Activated CD4-positive, alpha-beta T cell treated with anti-CD3 and anti-CD28 coated beads, Interleukin-2, amount 10 ng/mL, durations not matched to agents 24 days and 14 days (primary cell): ENCODE measurements at regions of chr19 and their contacts with region 1.

Region 1: GRCh38 chr19:925526-926322 is at the start of gene ARID3A:
- DNase-seq: peak; percentile 94
- H3K4me3 Mint-ChIP-seq: peak within 1 kb of the TSS; percentile 86
- H3K27ac Mint-ChIP-seq: peak within 1 kb of the TSS; percentile 83
- H3K4me1 Mint-ChIP-seq: peaks cover 11% of the 10 kb centered on the region
- H3K27me3 Mint-ChIP-seq: no peaks in the 10 kb centered on the region
- total RNA-seq, gene ARID3A: 35.6 and 36.6 TPM in 2 replicates

Region 2: DNA sequence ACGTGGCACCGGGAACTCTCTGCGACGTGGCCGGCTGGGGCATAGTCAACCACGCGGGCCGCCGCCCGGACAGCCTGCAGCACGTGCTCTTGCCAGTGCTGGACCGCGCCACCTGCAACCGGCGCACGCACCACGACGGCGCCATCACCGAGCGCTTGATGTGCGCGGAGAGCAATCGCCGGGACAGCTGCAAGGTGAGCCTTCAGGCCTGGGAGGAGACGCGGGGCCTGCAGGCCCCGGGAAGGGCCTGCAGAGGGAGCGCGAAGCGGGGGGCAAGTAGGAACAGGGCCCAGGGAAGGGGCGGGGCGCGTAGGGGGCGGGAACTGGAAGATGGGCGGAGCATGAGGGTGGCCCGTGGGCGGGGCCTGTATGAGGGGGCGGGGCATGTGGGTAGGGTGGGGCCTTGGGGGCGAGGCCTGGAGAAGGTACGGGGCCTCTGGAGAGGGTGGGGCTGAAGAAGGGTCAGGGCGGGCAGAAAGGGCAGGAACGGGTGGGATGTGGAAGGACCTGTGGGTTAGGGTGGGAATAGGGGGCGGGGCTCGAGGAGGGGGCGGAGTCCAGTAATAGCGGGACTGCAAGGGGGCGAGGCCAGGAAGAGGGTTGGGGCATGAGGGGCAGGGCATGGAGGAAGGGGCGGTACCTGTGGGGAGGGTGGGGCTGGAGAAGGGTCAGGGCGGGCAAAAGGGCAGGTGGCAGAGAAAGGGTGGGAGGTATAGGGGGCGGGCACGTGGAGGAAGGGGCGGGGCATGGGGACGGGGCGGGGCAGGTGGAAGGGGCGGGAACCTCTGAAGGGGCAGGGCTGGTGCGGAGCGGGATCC is 63.8 kb before region 1 on chr19:
- intact Hi-C with region 1: loop called (anchors 1 kb)
- DNase-seq: peak; percentile 86
- H3K4me3 Mint-ChIP-seq: peak overlapping the region; percentile 79
- H3K27ac Mint-ChIP-seq: peak overlapping the region; percentile 72
- H3K4me1 Mint-ChIP-seq: peaks cover 5% of the 10 kb centered on the region
- H3K27me3 Mint-ChIP-seq: peaks cover 12% of the 10 kb centered on the region

Region 3: DNA sequence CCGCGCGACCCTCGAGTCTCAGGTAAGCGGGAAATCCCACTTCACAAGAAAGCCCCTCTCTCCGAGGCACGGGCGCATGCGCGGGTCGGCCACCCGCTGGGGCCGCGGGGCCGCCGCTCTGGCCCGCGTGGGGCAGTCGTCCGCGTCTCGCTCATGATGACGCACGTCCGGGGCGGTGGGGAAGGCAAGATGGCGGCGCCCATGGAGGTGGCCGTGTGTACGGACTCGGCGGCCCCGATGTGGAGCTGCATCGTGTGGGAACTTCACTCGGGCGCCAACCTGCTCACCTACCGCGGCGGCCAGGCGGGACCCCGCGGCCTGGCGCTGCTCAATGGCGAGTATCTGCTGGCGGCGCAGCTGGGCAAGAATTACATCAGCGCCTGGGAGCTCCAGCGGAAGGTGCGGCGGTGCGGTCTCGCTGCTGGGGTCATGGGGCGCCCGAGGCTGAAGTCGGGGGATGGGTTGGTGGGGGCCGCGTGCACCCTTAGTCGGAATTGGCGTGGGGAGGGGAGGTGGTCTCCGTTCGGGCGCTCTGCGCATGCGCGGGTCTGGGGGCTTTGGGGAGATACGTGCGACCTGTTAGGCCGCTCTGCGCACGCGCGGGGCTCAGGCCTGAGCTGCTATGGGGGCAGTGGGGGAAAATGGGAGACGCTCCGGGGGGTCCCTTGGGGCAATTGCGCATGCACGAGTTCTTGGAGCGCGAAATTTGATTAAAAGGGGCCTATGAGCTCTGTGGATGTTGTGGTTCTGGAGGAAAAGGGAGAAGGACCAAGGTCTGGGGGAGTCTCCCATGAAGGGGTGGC is 58.6 kb after region 1 on chr19 and contains the start of gene WDR18:
- intact Hi-C with region 1: loop called (anchors 1 kb)
- DNase-seq: peak; percentile 98
- H3K4me3 Mint-ChIP-seq: peak within 1 kb of the TSS; percentile 98
- H3K27ac Mint-ChIP-seq: peak within 1 kb of the TSS; percentile 94
- H3K4me1 Mint-ChIP-seq: peaks cover 10% of the 10 kb centered on the region
- H3K27me3 Mint-ChIP-seq: no peaks in the 10 kb centered on the region
- total RNA-seq, gene WDR18: 104 and 111 TPM in 2 replicates

Region 4: GRCh38 chr19:1001538-1002166 is 75.9 kb after region 1 on chr19:
- intact Hi-C with region 1: loop called (anchors 1 kb)
- DNase-seq: peak; percentile 93
- H3K4me3 Mint-ChIP-seq: peak overlapping the region; percentile 44
- H3K27ac Mint-ChIP-seq: no peak overlapping the region
- H3K4me1 Mint-ChIP-seq: peaks cover 6% of the 10 kb centered on the region
- H3K27me3 Mint-ChIP-seq: peaks cover 32% of the 10 kb centered on the region

Region 5: DNA sequence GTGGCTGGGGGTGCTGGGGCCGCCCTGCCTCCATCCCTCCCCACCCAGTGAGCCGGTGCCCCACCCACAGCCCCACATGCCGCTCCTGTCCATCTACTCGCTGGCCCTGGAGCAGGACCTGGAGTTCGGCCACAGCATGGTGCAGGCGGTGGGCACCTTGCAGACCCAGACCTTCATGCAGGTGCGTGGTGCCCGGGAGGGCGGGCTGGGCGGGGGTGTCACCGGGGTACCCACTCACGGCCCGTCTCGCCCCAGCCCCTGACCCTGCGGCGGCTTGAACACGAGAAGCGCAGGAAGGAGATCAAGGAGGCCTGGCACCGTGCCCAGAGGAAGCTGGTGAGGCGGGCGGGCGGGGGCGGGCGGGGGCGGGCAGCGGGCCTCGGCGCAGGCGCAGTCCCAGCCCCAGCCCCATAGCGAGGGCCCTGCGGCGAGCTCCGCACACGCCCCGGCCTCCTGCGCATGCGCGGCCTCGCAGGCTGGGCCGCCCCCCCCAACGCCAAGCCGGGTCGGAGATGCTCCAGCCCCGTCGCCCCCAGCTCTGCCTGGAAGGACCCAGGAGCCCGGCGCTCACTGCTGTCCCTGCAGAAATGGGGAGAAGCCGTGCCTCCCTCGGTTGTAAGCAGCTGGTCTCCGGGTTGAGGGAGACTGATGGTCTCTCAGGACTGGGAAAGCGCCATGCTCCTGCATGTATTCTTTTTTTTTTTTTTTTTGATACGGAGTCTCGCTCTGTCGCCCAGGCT is 149.0 kb after region 1 on chr19:
- intact Hi-C with region 1: loop called (anchors 5 kb)
- DNase-seq: peak; percentile 94
- H3K4me3 Mint-ChIP-seq: peak overlapping the region; percentile 78
- H3K27ac Mint-ChIP-seq: peak overlapping the region; percentile 89
- H3K4me1 Mint-ChIP-seq: peaks cover 42% of the 10 kb centered on the region
- H3K27me3 Mint-ChIP-seq: peaks cover 2% of the 10 kb centered on the region

Region 6: GRCh38 chr19:1189419-1189818 is 263.7 kb after region 1 on chr19:
- intact Hi-C with region 1: loop called (anchors 5 kb)
- DNase-seq: peak; percentile 85
- H3K4me3 Mint-ChIP-seq: peak overlapping the region; percentile 36
- H3K27ac Mint-ChIP-seq: peak overlapping the region; percentile 68
- H3K4me1 Mint-ChIP-seq: peaks cover 27% of the 10 kb centered on the region
- H3K27me3 Mint-ChIP-seq: no peaks in the 10 kb centered on the region